Activated naive CD4-positive, alpha-beta T cell treated with anti-CD3 and anti-CD28 coated beads, Interleukin-2, amount 10 ng/mL, durations not matched to agents 7 days and 5 days (primary cell): ENCODE measurements at regions of chr21 and their contacts with region 1.

Region 1: DNA sequence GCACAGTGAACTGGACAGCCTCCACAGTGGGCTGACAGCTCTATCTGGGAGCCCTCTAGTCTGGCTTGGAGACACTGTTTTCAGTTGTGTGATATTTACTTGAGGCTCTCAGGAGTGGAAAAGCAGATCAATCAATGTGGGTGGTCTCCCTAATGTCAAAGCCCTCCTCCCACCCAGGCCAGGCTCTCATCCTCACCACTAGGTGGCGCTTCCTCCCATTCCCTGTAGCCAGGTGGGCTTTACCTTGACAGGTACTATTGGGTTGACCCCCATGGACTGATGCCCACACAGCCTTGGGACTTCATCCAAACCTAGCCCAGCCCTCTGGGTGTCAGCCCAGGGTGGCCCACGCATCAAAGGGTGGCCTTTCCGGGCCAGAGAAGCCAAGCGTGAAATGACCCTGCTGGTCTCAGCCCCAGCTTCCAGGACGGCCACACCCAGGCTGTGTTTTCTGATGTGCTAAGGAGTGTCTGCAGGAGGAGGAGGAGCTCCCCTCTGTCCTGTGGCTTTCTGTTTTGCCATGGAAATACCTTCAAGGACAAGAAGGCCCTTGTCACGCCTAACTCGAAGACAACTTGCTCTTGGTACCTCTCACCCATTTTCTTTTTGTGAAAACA is 54.0 kb downstream of the CLIC6 start:
- DNase-seq: peak; percentile 27
- H3K4me3 Mint-ChIP-seq: no peak overlapping the region
- H3K27ac Mint-ChIP-seq: no peak overlapping the region
- H3K4me1 Mint-ChIP-seq: peaks cover 10% of the 10 kb centered on the region
- H3K27me3 Mint-ChIP-seq: peaks cover 43% of the 10 kb centered on the region

Region 2: GRCh38 chr21:34693192-34693810 is 29.5 kb before region 1 on chr21:
- CTCF ChIA-PET with region 1: interaction called, 13 read pairs
- DNase-seq: peak; percentile 61
- H3K4me3 Mint-ChIP-seq: no peak overlapping the region
- H3K27ac Mint-ChIP-seq: no peak overlapping the region
- H3K4me1 Mint-ChIP-seq: peaks cover 7% of the 10 kb centered on the region
- H3K27me3 Mint-ChIP-seq: peaks cover 49% of the 10 kb centered on the region

Region 3: GRCh38 chr21:34707876-34708325 is 14.9 kb before region 1 on chr21:
- CTCF ChIA-PET with region 1: interaction called, 15 read pairs
- DNase-seq: peak; percentile 59
- H3K4me3 Mint-ChIP-seq: no peak overlapping the region
- H3K27ac Mint-ChIP-seq: peak overlapping the region; percentile 85
- H3K4me1 Mint-ChIP-seq: peaks cover 25% of the 10 kb centered on the region
- H3K27me3 Mint-ChIP-seq: peaks cover 35% of the 10 kb centered on the region

Region 4: GRCh38 chr21:35840197-35840799 is 1117.5 kb after region 1 on chr21:
- CTCF ChIA-PET with region 1: interaction called, 10 read pairs
- DNase-seq: peak; percentile 69
- H3K4me3 Mint-ChIP-seq: no peak overlapping the region
- H3K27ac Mint-ChIP-seq: no peak overlapping the region
- H3K4me1 Mint-ChIP-seq: no peaks in the 10 kb centered on the region
- H3K27me3 Mint-ChIP-seq: peaks cover 11% of the 10 kb centered on the region